ENCODE measurements at regions of chr12 and their contacts with region 1.

Region 1: DNA sequence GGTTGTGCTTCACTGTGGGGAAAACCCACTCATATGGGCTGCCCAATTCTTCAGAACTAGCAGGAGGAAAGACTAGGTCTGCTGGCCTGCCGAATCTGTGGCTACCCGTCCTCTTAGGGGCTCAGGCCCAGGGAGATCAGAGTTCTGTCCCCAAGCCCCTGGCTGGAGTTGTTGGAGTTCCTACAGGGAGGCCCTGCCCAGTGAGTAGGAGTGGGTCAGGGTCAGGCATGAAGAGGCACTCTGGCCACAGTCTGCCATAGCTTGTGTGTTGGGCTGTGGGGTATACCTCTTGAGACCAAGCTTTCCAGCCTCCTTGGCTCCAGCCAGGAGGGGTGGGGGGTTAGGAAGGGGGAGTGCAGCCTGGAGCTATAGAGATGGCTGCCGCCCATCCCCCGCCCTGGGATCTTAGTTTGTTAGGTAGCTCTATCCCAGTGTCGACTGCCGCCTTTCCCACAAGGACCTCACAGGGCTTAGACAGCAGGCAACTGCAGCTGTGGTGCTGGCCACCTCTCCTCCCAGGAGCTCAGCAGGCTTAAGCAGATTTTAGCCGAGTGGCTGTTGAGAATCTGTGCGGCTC is 216.4 kb downstream of the PLCZ1 start:
- DNase-seq: no peak
- H3K4me3 ChIP-seq: no peak overlapping the region
- CTCF ChIP-seq: no peak

Region 2: DNA sequence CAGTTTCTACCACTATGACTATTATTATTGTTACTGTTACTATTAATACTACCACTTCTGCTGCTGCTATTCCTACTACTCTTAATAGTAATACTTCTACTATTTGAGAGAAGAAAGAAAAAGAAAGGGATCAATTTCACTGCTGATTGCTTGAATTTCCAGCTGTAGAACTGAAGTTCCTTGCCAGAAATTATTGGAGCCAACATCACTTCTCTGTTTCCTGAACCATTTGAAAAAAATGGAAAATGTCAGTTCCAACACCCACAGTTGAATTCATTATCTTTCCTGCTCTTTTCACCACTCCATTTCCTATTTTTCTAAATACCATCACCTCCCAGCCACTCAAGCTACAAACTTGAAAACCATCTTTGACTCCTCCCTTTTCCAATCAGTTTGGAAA is 314.1 kb before region 1 on chr12:
- in situ Hi-C with region 1: loop called (anchors 10 kb)
- DNase-seq: no peak
- H3K4me3 ChIP-seq: no peak overlapping the region
- CTCF ChIP-seq: no peak

Region 3: DNA sequence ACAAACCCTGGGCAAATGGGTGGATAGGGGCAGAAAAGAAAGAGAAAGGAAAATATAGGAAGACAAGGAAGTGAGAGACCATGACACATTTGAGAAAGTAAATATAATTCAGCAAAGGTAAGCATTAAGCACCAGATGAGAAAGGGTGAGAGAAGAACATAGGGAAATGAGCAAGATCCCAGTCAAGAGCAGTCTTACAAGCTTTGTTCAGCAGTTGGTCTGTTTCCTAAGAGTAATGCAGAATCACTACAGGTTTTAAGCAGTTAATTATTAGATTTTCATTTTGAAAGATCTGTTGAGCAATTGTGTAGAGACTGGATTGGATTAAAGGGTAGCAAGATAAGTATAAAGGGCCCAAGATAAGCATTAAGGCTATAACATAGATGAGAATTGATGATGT is 70.1 kb after region 1 on chr12:
- in situ Hi-C with region 1: loop called (anchors 5 kb)
- DNase-seq: no peak
- H3K4me3 ChIP-seq: no peak overlapping the region
- CTCF ChIP-seq: no peak